Activated CD8-positive, alpha-beta T cell treated with anti-CD3 and anti-CD28 coated beads, Interleukin-2, amount 10 ng/mL, durations not matched to agents 7 days and 5 days (primary cell): ENCODE measurements at regions of chr6 and their contacts with region 1.

Region 1: GRCh38 chr6:52664186-52664990 is 6.5 kb upstream of the TMEM14A start:
- DNase-seq: peak; percentile 84
- ATAC-seq: peak; percentile 97
- H3K4me3 Mint-ChIP-seq: no peak overlapping the region
- H3K27ac Mint-ChIP-seq: no peak overlapping the region
- H3K4me1 Mint-ChIP-seq: peaks cover 1% of the 10 kb centered on the region
- H3K27me3 Mint-ChIP-seq: no peaks in the 10 kb centered on the region

Region 2: GRCh38 chr6:52407467-52407866 is 256.9 kb before region 1 on chr6:
- CTCF ChIA-PET with region 1: interaction called, 20 read pairs
- POLR2A ChIA-PET with region 1: no interaction called
- DNase-seq: peak; percentile 34
- ATAC-seq: peak; percentile 79
- H3K4me3 Mint-ChIP-seq: no peak overlapping the region
- H3K27ac Mint-ChIP-seq: no peak overlapping the region
- H3K4me1 Mint-ChIP-seq: peaks cover 2% of the 10 kb centered on the region
- H3K27me3 Mint-ChIP-seq: no peaks in the 10 kb centered on the region

Region 3: DNA sequence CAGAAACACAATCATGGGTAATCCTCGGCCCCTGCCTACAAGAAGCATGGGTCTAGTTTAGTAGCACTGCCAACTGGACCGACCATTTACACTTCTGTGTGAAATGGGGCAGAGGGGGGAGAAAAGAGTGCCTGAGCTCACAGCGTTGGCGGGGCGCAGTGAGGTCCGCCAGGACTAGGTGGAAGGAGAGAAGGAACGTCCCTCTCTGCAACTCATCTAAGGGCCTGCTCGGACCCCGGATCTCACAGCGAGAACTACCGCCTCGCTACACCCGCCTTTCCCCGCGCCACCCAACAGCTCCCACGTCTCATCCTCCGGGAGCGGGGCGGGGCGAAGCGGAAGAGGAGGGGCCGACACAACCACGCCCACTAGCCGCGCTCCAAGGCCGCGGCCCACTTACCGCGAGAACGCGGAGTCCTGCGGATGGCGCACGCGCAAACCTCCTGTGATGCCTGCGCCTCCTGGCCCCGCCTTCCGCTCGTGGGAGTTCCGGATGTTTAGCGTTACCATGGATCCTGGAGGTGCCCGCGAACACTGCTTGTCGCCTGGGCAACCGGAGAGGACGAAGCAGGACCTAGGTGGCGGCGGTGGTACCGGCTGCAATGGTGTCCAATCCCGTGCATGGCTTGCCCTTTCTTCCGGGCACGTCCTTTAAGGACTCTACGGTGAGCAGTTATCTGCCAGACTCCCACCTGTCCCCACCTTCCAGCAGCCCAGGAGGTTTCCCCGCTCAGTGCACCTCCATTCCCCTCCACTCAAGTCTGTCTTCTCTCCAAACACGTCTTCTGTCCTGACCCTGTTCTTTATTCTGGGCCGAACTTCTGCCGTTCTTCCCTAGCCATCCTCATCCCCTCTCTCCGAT is 244.3 kb before region 1 on chr6 and contains the start of gene EFHC1:
- CTCF ChIA-PET with region 1: interaction called, 49 read pairs
- POLR2A ChIA-PET with region 1: interaction called, 6 read pairs
- DNase-seq: peak; percentile 99
- ATAC-seq: peak; percentile 93
- H3K4me3 Mint-ChIP-seq: no peak within 1 kb of the TSS
- H3K27ac Mint-ChIP-seq: peak within 1 kb of the TSS; percentile 75
- H3K4me1 Mint-ChIP-seq: peaks cover 27% of the 10 kb centered on the region
- H3K27me3 Mint-ChIP-seq: no peaks in the 10 kb centered on the region
- total RNA-seq, gene EFHC1: 1.4 to 2.5 TPM